ENCODE measurements at regions of chr2 and their contacts with region 1.

Region 1: GRCh38 chr2:65554765-65555591 is 122.6 kb upstream of the SPRED2 start:
- DNase-seq: no peak
- ATAC-seq: no peak
- H3K4me3 ChIP-seq: no peak overlapping the region
- H3K27ac ChIP-seq: no peak overlapping the region
- H3K4me1 ChIP-seq: no peaks in the 10 kb centered on the region
- H3K27me3 ChIP-seq: no peaks in the 10 kb centered on the region
- CTCF ChIP-seq: no peak
- POLR2A ChIP-seq: no peak

Region 2: GRCh38 chr2:65264821-65265670 is 289.9 kb before region 1 on chr2:
- intact Hi-C with region 1: loop called (anchors 5 to 10 kb)
- DNase-seq: no peak
- ATAC-seq: peak; percentile 81 to 94 (median 86)
- H3K4me3 ChIP-seq: no peak overlapping the region
- H3K27ac ChIP-seq: no peak overlapping the region
- H3K4me1 ChIP-seq: peaks cover 0 to 4% (median 0%) of the 10 kb centered on the region in 4 donors
- H3K27me3 ChIP-seq: no peaks in the 10 kb centered on the region
- CTCF ChIP-seq: peak; percentile 58 to 79 (median 70)
- POLR2A ChIP-seq: no peak

Region 3: DNA sequence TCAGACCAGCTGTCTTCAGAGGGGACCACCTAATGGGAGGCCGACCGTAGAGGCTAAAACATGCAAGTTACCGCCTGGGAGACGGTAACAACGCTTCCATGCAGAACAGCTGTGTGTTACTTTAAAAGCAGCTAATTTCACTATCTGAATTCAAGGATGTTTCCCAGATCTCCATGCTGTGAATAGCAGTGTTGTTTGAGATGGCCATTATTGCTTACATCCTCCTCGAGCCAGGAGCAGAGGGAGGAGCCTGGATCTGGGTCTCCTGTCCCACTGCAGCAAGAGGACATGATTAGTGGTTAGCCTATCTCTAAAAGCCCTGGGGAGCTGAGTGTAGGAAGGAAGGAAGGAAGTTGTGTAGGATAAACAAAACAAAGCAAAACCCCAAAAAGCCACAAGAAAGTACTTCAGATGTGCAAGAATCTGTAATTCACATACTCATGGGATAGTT is 276.4 kb before region 1 on chr2:
- intact Hi-C with region 1: loop called in 1 of 2 experiments (anchors 10 kb)
- DNase-seq: no peak
- ATAC-seq: peak; percentile 62 to 85 (median 73)
- H3K4me3 ChIP-seq: no peak overlapping the region
- H3K27ac ChIP-seq: no peak overlapping the region
- H3K4me1 ChIP-seq: peaks cover 0 to 3% (median 0%) of the 10 kb centered on the region in 4 donors
- H3K27me3 ChIP-seq: no peaks in the 10 kb centered on the region
- CTCF ChIP-seq: no peak
- POLR2A ChIP-seq: no peak

Measured in right lobe of liver (tissue), 6 donors.